Activated B cell treated with CpG ODN at 0.5 μM for 24 hours (primary cell): ENCODE measurements at regions of chr11 and their contacts with region 1.

Region 1: DNA sequence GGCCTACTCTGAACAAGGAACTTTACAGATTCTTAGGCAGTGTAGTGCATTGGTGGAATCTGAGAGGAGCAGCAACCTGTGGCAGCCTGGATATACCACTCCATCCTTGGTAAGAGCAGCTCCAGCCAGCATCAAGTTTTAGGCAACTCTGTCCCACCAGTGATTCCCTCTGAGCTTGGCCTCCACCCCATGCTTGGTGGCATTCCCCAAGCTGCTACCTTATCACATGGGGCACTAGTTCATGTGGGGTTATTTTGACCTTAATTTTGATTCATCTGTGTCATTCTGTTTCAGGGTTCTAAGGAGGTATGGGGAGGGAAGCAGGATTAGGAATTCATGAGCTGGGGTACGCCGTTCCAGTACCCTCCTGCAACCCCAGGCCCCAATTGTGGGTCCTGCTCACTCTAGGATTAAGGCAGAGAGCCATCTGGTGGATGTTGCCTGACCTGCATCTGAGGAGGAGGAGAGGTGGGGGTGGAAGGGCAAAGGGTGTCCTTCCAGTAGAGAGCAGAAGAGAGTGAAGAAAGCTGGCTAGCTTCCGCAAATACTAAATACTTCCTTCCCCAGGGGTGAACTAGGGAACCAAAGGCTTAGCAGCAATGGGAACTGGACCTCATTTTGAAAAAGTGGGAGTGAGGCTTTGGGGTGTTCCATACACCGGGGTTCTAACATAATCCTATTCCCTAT is 10.5 kb downstream of the LRRC51 start:
- DNase-seq: peak; percentile 39
- ATAC-seq: peak; percentile 99
- H3K4me3 Mint-ChIP-seq: no peak overlapping the region
- H3K27ac Mint-ChIP-seq: peak overlapping the region; percentile 33
- H3K4me1 Mint-ChIP-seq: peaks cover 14% of the 10 kb centered on the region
- H3K27me3 Mint-ChIP-seq: no peaks in the 10 kb centered on the region
- CTCF ChIP-seq: no peak

Region 2: DNA sequence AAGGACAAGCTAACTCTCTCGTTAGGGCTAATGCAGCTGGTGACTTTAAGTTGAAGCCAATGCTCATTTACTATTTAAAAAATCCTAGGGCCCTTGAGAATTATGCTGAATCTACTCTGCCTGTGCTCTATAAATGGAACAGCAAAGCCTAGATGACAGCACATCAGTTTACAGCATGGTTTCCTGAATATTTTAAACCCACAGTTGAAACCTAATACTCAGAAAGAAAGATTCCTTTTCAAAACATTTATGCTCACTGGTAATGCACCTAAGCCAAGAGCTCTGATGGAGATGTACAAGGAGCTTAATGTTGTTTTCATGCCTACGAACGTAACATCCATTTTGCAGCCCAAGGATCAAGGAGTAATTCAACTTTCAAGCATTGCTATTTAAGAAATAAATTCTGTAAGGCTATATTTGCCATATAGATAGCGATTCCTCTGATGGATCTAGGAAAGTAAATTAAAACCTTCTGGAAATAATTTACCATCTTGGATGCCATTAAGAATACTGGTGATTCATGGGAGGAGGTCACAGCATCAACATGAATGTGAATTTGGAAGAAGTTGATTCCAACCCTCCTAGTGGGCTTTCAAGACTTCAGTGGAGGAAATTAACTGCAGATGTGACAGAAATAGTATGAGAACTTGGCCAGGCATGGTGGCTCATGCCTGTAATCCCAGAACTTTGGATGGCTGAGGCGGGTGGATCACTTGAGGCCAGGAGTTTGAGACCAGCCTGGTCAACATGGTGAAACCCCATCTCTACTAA is 177.2 kb before region 1 on chr11:
- CTCF ChIA-PET with region 1: interaction called, 4 read pairs
- POLR2A ChIA-PET with region 1: no interaction called
- intact Hi-C with region 1: loop called (anchors 2 kb)
- DNase-seq: no peak
- ATAC-seq: no peak
- H3K4me3 Mint-ChIP-seq: no peak overlapping the region
- H3K27ac Mint-ChIP-seq: no peak overlapping the region
- H3K4me1 Mint-ChIP-seq: peaks cover 8% of the 10 kb centered on the region
- H3K27me3 Mint-ChIP-seq: no peaks in the 10 kb centered on the region
- CTCF ChIP-seq: no peak

Region 3: GRCh38 chr11:71977743-71978418 is 113.3 kb before region 1 on chr11:
- CTCF ChIA-PET with region 1: interaction called, 34 read pairs
- POLR2A ChIA-PET with region 1: interaction called, 3 read pairs
- intact Hi-C with region 1: loop called (anchors 1 kb)
- DNase-seq: no peak
- ATAC-seq: peak; percentile 96
- H3K4me3 Mint-ChIP-seq: no peak overlapping the region
- H3K27ac Mint-ChIP-seq: peak overlapping the region; percentile 91
- H3K4me1 Mint-ChIP-seq: peaks cover 16% of the 10 kb centered on the region
- H3K27me3 Mint-ChIP-seq: no peaks in the 10 kb centered on the region
- CTCF ChIP-seq: peak; percentile 26

Region 4: GRCh38 chr11:72024069-72024754 is 66.9 kb before region 1 on chr11:
- CTCF ChIA-PET with region 1: interaction called, 152 read pairs
- POLR2A ChIA-PET with region 1: interaction called, 16 read pairs
- intact Hi-C with region 1: loop called (anchors 1 kb)
- DNase-seq: no peak
- ATAC-seq: no peak
- H3K4me3 Mint-ChIP-seq: no peak overlapping the region
- H3K27ac Mint-ChIP-seq: no peak overlapping the region
- H3K4me1 Mint-ChIP-seq: peaks cover 21% of the 10 kb centered on the region
- H3K27me3 Mint-ChIP-seq: no peaks in the 10 kb centered on the region
- CTCF ChIP-seq: no peak

Region 5: GRCh38 chr11:72080256-72080974 is 10.7 kb before region 1 on chr11 and contains the starts of genes LRRC51 and NUMA1:
- CTCF ChIA-PET with region 1: interaction called, 17 read pairs
- POLR2A ChIA-PET with region 1: interaction called, 3 read pairs
- intact Hi-C with region 1: loop called (anchors 1 kb)
- DNase-seq: peak; percentile 94
- ATAC-seq: peak; percentile 90
- H3K4me3 Mint-ChIP-seq: peak within 1 kb of the TSS; percentile 95
- H3K27ac Mint-ChIP-seq: peak within 1 kb of the TSS; percentile 91
- H3K4me1 Mint-ChIP-seq: peaks cover 35% of the 10 kb centered on the region
- H3K27me3 Mint-ChIP-seq: no peaks in the 10 kb centered on the region
- CTCF ChIP-seq: no peak
- total RNA-seq, gene LRRC51: 4.1 and 4.5 TPM in 2 replicates
- total RNA-seq, gene NUMA1: 146 and 163 TPM in 2 replicates

Region 6: GRCh38 chr11:72102946-72103753 is 12.0 kb after region 1 on chr11 and contains the start of gene LAMTOR1:
- CTCF ChIA-PET with region 1: interaction called, 15 read pairs
- POLR2A ChIA-PET with region 1: interaction called, 4 read pairs
- intact Hi-C with region 1: loop called (anchors 1 kb)
- DNase-seq: peak; percentile 93
- ATAC-seq: peak; percentile 96
- H3K4me3 Mint-ChIP-seq: peak within 1 kb of the TSS; percentile 96
- H3K27ac Mint-ChIP-seq: peak within 1 kb of the TSS; percentile 93
- H3K4me1 Mint-ChIP-seq: peaks cover 46% of the 10 kb centered on the region
- H3K27me3 Mint-ChIP-seq: no peaks in the 10 kb centered on the region
- CTCF ChIP-seq: no peak
- total RNA-seq, gene LAMTOR1: 87.2 and 87.6 TPM in 2 replicates

Region 7: GRCh38 chr11:72141066-72141465 is 49.9 kb after region 1 on chr11:
- CTCF ChIA-PET with region 1: interaction called, 25 read pairs
- POLR2A ChIA-PET with region 1: no interaction called
- intact Hi-C with region 1: loop called (anchors 1 kb)
- DNase-seq: no peak
- ATAC-seq: no peak
- H3K4me3 Mint-ChIP-seq: no peak overlapping the region
- H3K27ac Mint-ChIP-seq: no peak overlapping the region
- H3K4me1 Mint-ChIP-seq: peaks cover 1% of the 10 kb centered on the region
- H3K27me3 Mint-ChIP-seq: peaks cover 17% of the 10 kb centered on the region
- CTCF ChIP-seq: no peak

Region 8: DNA sequence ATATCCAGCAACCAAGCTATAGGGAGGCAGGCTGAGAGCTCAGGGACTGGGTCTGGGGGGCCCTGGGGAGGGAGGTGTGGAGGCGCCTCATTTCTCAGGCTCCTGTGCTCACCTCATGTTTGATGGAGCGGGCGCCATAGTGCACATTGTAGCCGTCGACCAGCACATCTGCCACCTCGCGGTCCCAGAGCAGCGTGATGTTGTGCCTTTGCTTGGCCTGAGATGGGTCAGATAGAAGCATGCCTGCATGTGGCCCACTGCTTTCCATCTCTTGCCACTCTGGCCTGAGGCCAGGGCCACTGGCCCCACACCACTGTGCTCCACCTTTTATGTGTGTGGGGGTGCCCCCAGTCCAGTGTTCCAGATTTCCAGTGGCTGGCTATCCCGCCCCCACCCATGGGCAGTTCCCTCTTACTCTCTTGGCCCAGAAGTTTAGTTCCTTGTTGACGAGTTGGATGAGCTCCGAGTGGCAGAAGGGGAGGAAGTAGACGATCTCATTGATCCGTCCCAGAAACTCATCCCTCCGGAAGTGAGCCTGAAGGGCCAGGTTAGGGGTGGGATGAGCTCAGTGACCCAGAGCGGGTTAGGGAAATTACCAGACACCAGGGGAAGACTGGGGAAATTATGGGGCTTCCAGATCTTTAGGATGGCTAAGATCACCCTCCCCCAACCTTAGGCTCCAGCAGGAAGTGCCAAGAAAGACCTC is 202.9 kb after region 1 on chr11:
- CTCF ChIA-PET with region 1: no interaction called
- POLR2A ChIA-PET with region 1: no interaction called
- intact Hi-C with region 1: no loop called
- DNase-seq: no peak
- ATAC-seq: no peak
- H3K4me3 Mint-ChIP-seq: no peak overlapping the region
- H3K27ac Mint-ChIP-seq: no peak overlapping the region
- H3K4me1 Mint-ChIP-seq: peaks cover 17% of the 10 kb centered on the region
- H3K27me3 Mint-ChIP-seq: no peaks in the 10 kb centered on the region
- CTCF ChIP-seq: no peak